A673 (cell line): ENCODE measurements at regions of chr14 and their contacts with region 1.

Region 1: GRCh38 chr14:38522724-38523123 is 266.8 kb upstream of the CLEC14A start:
- DNase-seq: no peak
- H3K4me3 ChIP-seq: no peak overlapping the region
- H3K27ac ChIP-seq: no peak overlapping the region
- H3K4me1 ChIP-seq: peaks cover 28% of the 10 kb centered on the region
- H3K27me3 ChIP-seq: no peaks in the 10 kb centered on the region
- CTCF ChIP-seq: no peak

Region 2: DNA sequence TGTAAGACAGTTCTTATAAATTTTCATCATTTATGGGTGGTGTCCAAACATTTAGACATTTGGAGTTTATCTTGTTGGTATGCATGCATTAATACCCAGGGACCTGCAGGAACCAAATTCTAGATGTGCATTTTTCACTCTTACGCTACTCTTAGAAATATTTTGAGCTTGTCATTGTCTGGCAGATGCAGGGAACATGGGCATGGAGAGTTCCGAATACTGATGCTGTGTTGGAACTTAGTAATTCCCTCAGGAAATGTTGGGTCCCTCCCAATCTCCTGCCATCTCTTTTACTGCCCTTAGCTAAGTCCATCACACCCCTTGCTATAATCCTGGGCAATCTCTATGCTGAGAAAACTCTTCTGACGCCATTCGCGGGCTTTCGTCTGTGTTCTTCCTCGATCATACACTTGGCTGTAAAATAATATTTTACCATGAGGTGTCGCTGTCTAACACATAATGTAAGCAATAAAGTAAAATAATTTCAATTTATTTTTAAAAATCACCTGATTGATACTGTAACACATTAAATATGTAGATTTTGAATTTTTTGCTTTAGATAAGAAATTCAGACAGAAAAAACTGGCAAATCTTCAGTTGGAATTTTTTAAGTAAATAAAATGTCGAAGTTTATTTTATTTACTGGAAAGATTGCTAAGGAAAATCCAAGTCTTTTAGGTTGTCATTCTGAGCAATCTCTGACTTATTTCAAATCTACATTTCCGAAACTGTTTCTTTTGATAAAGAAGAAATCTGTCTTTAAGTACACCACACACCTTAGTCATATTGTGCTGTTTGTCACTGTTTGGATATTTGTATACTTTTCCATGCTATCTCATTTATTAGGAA is 619.2 kb before region 1 on chr14:
- CTCF ChIA-PET with region 1: no interaction called
- POLR2A ChIA-PET with region 1: no interaction called
- intact Hi-C with region 1: loop called (anchors 10 kb)
- DNase-seq: peak; percentile 77
- H3K4me3 ChIP-seq: no peak overlapping the region
- H3K27ac ChIP-seq: no peak overlapping the region
- H3K4me1 ChIP-seq: peaks cover 3% of the 10 kb centered on the region
- H3K27me3 ChIP-seq: no peaks in the 10 kb centered on the region
- CTCF ChIP-seq: peak; percentile 81

Region 3: GRCh38 chr14:38208618-38209562 is 313.8 kb before region 1 on chr14:
- CTCF ChIA-PET with region 1: interaction called, 6 read pairs
- POLR2A ChIA-PET with region 1: no interaction called
- intact Hi-C with region 1: loop called (anchors 5 kb)
- DNase-seq: peak; percentile 81
- H3K4me3 ChIP-seq: peak overlapping the region; percentile 55
- H3K27ac ChIP-seq: no peak overlapping the region
- H3K4me1 ChIP-seq: peaks cover 4% of the 10 kb centered on the region
- H3K27me3 ChIP-seq: peaks cover 26% of the 10 kb centered on the region
- CTCF ChIP-seq: peak; percentile 48

Region 4: GRCh38 chr14:38490273-38490672 is 32.5 kb before region 1 on chr14:
- CTCF ChIA-PET with region 1: no interaction called
- POLR2A ChIA-PET with region 1: no interaction called
- intact Hi-C with region 1: no loop called
- DNase-seq: no peak
- H3K4me3 ChIP-seq: no peak overlapping the region
- H3K27ac ChIP-seq: no peak overlapping the region
- H3K4me1 ChIP-seq: no peaks in the 10 kb centered on the region
- H3K27me3 ChIP-seq: no peaks in the 10 kb centered on the region
- CTCF ChIP-seq: no peak

Region 5: GRCh38 chr14:38553586-38553985 is 30.9 kb after region 1 on chr14:
- CTCF ChIA-PET with region 1: no interaction called
- POLR2A ChIA-PET with region 1: no interaction called
- intact Hi-C with region 1: loop called (anchors 1 kb)
- DNase-seq: peak; percentile 97
- H3K4me3 ChIP-seq: peak overlapping the region; percentile 9
- H3K27ac ChIP-seq: peak overlapping the region; percentile 92
- H3K4me1 ChIP-seq: peaks cover 55% of the 10 kb centered on the region
- H3K27me3 ChIP-seq: no peaks in the 10 kb centered on the region
- CTCF ChIP-seq: no peak

Region 6: DNA sequence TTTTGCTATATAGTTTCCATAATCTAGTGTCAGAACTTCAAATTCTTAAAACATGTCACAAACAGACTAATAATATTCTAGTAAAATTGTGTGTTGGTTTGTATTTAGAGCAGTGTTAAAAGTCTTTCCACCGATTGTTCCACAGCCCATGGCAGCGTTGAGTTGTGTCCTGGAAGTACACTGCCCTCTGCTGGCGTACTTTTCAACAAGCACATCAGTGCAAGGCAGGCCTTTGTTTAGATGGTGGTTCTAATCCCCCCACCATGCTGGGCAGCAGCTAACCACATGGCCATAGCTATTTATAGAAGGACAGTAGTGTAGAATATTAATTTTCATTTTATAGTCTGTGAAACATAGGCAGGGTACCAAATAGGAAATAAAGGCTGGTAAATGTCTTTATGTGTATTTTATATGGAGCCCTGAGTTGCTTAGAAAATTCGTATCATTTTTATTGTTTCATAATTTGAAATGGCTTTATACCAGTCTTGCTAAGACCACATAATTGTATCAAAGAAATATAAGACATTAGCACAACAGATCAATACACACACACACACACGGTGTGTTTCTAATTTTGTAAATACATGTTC is 344.9 kb after region 1 on chr14:
- CTCF ChIA-PET with region 1: no interaction called
- POLR2A ChIA-PET with region 1: no interaction called
- intact Hi-C with region 1: loop called (anchors 2 kb)
- DNase-seq: peak; percentile 90
- H3K4me3 ChIP-seq: no peak overlapping the region
- H3K27ac ChIP-seq: no peak overlapping the region
- H3K4me1 ChIP-seq: peaks cover 17% of the 10 kb centered on the region
- H3K27me3 ChIP-seq: no peaks in the 10 kb centered on the region
- CTCF ChIP-seq: peak; percentile 89